HAP-1 (cell line): ENCODE measurements at regions of chr9 and their contacts with region 1.

Region 1: DNA sequence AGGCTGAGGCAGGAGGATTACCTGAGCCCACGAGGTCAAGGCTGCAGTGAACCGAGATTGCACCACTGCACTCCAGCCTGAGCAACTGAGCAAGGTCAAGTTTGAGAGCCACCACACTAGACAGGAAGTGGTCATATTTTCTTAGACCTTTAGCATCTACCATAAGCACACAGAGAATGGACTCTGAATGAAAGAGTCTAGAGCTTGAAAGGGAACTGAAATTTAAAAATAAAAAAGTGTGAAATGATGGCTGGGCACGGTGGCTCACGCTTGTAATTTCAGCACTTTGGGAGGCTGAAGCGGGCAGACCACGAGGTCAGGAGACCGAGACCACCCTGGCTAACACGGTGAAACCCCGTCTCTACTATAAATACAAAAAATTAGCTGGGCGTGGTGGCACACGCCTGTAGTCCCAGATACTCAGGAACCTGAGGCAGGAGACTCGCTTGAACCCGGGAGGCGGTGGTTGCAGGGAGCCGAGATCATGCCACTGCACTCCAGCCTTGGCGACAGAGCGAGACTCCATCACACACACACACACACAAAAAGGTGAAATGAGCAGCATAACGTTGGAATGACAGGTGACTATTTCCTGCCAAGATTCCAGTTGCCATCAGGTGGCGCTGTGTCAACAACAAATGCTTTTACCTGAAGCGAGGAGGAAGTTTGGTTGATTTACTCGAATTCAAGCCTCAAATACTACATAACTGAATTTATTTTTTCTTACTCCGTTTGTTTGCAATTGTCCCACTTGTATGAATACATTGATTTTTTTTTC is 21.3 kb upstream of the AK3 start:
- DNase-seq: peak; percentile 67 to 84
- H3K4me3 ChIP-seq: 0 out of 2 replicates have a peak overlapping the region, but pooled peaks have one; percentile 5
- H3K4me1 ChIP-seq: peaks cover 6% of the 10 kb centered on the region
- H3K27me3 ChIP-seq: no peaks in the 10 kb centered on the region

Region 2: DNA sequence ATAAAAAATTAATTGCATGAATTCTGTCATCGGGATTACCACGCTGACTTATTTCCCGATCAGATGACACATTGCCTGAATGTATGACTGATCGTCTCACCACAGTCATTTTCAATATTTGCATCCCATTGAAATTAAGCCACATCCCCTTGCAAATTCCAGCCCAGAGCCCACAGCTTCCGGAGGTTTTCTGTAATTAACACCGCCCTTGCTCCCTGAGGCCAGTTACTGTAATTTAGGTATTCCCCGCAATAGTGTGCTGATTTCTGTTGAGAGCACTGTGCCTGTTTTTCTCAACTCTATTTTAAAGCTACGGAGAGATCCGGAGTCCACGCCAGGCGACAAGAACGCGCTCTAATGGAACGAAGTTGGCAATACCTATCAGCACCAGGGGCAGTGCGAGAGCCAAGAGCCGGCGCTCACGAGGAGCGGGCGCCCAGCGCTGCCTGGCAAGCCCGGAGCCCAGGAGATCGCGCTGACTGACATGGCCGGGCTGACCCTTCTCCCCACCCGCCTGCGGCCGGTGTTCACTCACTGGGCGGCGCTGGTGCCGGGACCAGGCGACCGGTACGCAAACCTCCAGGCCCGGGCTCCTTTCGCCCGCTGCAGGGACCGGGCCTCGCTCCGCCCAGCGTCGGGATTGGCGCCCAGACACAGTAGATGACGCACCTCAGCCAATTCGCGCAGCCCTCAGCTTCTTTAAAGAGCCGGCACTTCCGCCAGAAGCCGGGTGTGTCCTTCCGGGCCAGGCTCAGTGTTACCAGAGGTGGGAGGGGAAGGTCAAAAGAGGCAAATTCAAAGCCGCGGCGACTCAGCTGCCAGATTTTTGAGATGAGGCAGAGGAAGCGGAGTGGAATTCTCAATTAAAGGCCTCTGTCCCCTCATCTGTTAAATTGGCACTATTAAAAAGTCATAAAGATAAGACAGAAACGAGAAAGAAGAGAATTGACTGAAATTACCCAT is 675.2 kb after region 1 on chr9 and contains the start of gene PLGRKT:
- in situ Hi-C with region 1: loop called (anchors 25 kb)
- DNase-seq: peak; percentile 94 to 96
- H3K4me3 ChIP-seq: peak within 1 kb of the TSS; percentile 72
- H3K4me1 ChIP-seq: peaks cover 9% of the 10 kb centered on the region
- H3K27me3 ChIP-seq: no peaks in the 10 kb centered on the region